ENCODE measurements at regions of chr7 and their contacts with region 1.

Region 1: GRCh38 chr7:92682903-92683539 is 92.8 kb upstream of the FAM133B start:
- DNase-seq: peak; percentile 69
- H3K4me3 ChIP-seq: no peak overlapping the region
- H3K27ac ChIP-seq: no peak overlapping the region
- H3K4me1 ChIP-seq: peaks cover 5% of the 10 kb centered on the region
- H3K27me3 ChIP-seq: no peaks in the 10 kb centered on the region
- CTCF ChIP-seq: no peak
- POLR2A ChIP-seq: no peak

Region 2: GRCh38 chr7:92421676-92422435 is 261.2 kb before region 1 on chr7:
- CTCF ChIA-PET with region 1: no interaction called
- POLR2A ChIA-PET with region 1: no interaction called
- dilution Hi-C with region 1: no loop called
- intact Hi-C with region 1: no loop called
- DNase-seq: no peak
- H3K4me3 ChIP-seq: no peak overlapping the region
- H3K27ac ChIP-seq: no peak overlapping the region
- H3K4me1 ChIP-seq: no peaks in the 10 kb centered on the region
- H3K27me3 ChIP-seq: peaks cover 1 to 4% of the 10 kb centered on the region in 2 experiments
- CTCF ChIP-seq: no peak
- POLR2A ChIP-seq: no peak

Region 3: GRCh38 chr7:92645114-92646061 is 37.6 kb before region 1 on chr7:
- CTCF ChIA-PET with region 1: no interaction called
- POLR2A ChIA-PET with region 1: no interaction called
- dilution Hi-C with region 1: no loop called
- intact Hi-C with region 1: loop called (anchors 1 kb)
- DNase-seq: peak; percentile 90
- H3K4me3 ChIP-seq: no peak overlapping the region
- H3K27ac ChIP-seq: peak overlapping the region; percentile 53
- H3K4me1 ChIP-seq: peaks cover 35% of the 10 kb centered on the region
- H3K27me3 ChIP-seq: no peaks in the 10 kb centered on the region
- CTCF ChIP-seq: no peak
- POLR2A ChIP-seq: no peak

Region 4: GRCh38 chr7:92843034-92843760 is 160.2 kb after region 1 on chr7:
- CTCF ChIA-PET with region 1: no interaction called
- POLR2A ChIA-PET with region 1: no interaction called
- dilution Hi-C with region 1: no loop called
- intact Hi-C with region 1: no loop called
- DNase-seq: no peak
- H3K4me3 ChIP-seq: no peak overlapping the region
- H3K27ac ChIP-seq: no peak overlapping the region
- H3K4me1 ChIP-seq: no peaks in the 10 kb centered on the region
- H3K27me3 ChIP-seq: peaks cover 8 to 27% of the 10 kb centered on the region in 2 experiments
- CTCF ChIP-seq: no peak
- POLR2A ChIP-seq: no peak